Mammary epithelial cell (primary cell): ENCODE measurements at regions of chr17 and their contacts with region 1.

Region 1: GRCh38 chr17:33647956-33648355 is 354.9 kb upstream of the ASIC2 start:
- DNase-seq: peak; percentile 2
- H3K4me3 ChIP-seq: no peak overlapping the region
- H3K27ac ChIP-seq: no peak overlapping the region
- H3K4me1 ChIP-seq: no peaks in the 10 kb centered on the region
- H3K27me3 ChIP-seq: peaks cover 2% of the 10 kb centered on the region
- CTCF ChIP-seq: peak; percentile 37 to 77

Region 2: DNA sequence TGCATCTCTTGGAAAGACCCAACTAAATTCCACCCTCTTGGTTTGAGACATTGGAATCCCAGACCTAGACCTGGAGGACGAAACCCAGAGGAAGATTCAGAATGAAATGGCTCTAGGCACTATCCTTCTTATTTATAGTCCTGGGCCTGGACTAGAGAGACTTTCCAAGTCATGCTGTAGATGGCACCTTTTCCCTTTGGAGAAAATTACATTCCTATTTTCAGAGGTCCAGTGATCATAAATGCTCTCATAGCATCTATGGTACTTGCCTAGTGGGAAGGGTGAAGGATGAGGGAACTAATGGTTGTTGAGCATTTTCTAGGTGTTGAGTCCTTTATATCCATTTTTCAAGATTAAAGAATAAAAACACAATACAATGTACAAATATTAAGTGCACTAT is 619.2 kb before region 1 on chr17:
- CTCF ChIA-PET with region 1: no interaction called
- dilution Hi-C with region 1: no loop called
- in situ Hi-C with region 1: loop called in 1 of 2 experiments (anchors 10 kb)
- intact Hi-C with region 1: loop called (anchors 2 kb)
- DNase-seq: no peak
- H3K4me3 ChIP-seq: no peak overlapping the region
- H3K27ac ChIP-seq: no peak overlapping the region
- H3K4me1 ChIP-seq: no peaks in the 10 kb centered on the region
- H3K27me3 ChIP-seq: no peaks in the 10 kb centered on the region
- CTCF ChIP-seq: peak in 1 of 2 donors; percentile 39

Region 3: GRCh38 chr17:33302394-33302793 is 345.6 kb before region 1 on chr17:
- CTCF ChIA-PET with region 1: no interaction called
- dilution Hi-C with region 1: no loop called
- in situ Hi-C with region 1: no loop called
- intact Hi-C with region 1: loop called (anchors 10 kb)
- DNase-seq: peak; percentile 12
- H3K4me3 ChIP-seq: no peak overlapping the region
- H3K27ac ChIP-seq: no peak overlapping the region
- H3K4me1 ChIP-seq: no peaks in the 10 kb centered on the region
- H3K27me3 ChIP-seq: no peaks in the 10 kb centered on the region
- CTCF ChIP-seq: no peak

Region 4: DNA sequence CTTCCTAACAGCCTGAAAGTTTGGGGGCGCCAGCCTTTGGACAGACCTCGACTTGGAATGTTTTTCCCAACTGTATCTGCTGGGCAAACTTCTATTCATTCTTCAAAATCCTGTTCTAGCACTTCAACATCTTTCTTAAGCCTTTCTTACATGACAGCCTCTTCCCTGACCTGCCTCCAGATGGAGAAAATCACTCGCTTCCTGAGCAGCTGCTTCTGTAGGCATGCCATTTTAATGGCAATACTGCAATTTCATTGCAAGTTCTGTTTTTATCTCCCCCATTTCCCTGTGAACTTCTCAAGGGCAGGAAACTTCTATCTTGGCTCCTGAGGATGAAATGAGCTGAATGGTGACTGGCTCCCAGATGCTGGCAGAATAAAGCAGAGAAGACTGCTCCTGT is 226.0 kb before region 1 on chr17:
- CTCF ChIA-PET with region 1: no interaction called
- dilution Hi-C with region 1: no loop called
- in situ Hi-C with region 1: no loop called
- intact Hi-C with region 1: no loop called
- DNase-seq: no peak
- H3K4me3 ChIP-seq: no peak overlapping the region
- H3K27ac ChIP-seq: no peak overlapping the region
- H3K4me1 ChIP-seq: no peaks in the 10 kb centered on the region
- H3K27me3 ChIP-seq: no peaks in the 10 kb centered on the region
- CTCF ChIP-seq: no peak